Gastrocnemius medialis (tissue), 4 donors: ENCODE measurements at regions of chr2 and their contacts with region 1.

Region 1: GRCh38 chr2:117814417-117815264 is at the start of gene DDX18:
- DNase-seq: peak; percentile 94 to 95
- ATAC-seq: peak; percentile 98
- H3K4me3 ChIP-seq: peak within 1 kb of the TSS; percentile 80 to 87 (median 81)
- H3K27ac ChIP-seq: peak within 1 kb of the TSS; percentile 89 to 92 (median 92)
- H3K4me1 ChIP-seq: peaks cover 18 to 27% of the 10 kb centered on the region in 2 donors
- H3K27me3 ChIP-seq: no peaks in the 10 kb centered on the region
- CTCF ChIP-seq: peak; percentile 90 to 99 (median 99)
- POLR2A ChIP-seq: peak; percentile 63 to 68
- total RNA-seq, gene DDX18: 21.8 to 37.1 (median 24.7) TPM

Region 2: GRCh38 chr2:118003396-118003824 is 188.8 kb after region 1 on chr2:
- in situ Hi-C with region 1: no loop called
- intact Hi-C with region 1: loop called (anchors 1 kb)
- DNase-seq: peak; percentile 10 to 16
- ATAC-seq: peak; percentile 90 to 97
- H3K4me3 ChIP-seq: no peak overlapping the region
- H3K27ac ChIP-seq: no peak overlapping the region
- H3K4me1 ChIP-seq: peaks cover 0 to 5% of the 10 kb centered on the region in 2 donors
- H3K27me3 ChIP-seq: no peaks in the 10 kb centered on the region
- CTCF ChIP-seq: peak; percentile 62 to 83 (median 71)
- POLR2A ChIP-seq: no peak

Region 3: DNA sequence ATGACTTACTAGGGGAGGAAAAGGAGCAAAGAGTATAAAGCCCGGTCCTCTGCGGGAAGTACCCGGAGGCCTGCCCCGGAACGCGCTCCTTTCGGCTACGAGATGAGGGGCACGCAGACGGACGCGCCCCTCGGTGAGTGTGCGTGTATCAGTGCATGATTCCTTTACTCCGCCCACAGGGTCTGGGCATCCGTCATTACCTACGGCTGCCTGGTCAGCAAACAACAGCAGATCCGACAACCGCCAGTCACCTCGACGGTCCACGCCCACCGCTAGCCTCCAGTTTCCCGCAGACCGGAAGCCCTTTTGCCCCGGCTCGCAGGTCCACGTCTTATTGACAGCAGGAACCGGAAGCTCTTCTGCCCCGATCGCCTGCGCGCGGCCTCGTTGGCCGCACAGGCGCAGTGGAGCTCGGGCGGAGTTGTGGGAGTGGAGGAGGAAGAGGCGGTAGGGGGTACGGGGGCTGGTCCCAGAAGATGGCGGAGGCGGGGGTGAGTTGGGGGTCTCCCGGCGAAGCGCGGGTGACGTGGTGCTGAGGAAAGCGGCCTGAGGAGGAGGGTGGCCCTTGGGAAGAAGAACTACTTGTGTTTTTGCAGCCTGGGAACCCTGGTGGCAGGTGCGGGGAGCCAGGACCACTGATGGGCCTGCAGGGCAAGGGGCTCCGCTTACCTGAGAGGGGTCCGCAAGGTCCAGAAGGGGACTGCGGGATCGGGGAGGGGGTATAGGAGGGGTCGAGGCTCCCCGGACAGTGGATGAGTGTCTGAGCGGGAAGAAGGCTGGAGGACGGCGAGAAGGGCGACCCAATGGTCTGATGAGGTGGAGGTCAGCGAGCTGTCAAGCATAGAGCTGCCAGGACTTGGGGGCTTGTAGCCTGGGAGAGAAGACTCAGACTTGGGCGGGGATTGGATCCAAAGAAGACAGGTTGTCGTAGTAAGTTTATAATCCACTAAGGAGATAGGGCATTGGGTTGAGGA is 273.7 kb after region 1 on chr2 and contains the start of gene INSIG2:
- in situ Hi-C with region 1: no loop called
- intact Hi-C with region 1: loop called (anchors 2 kb)
- DNase-seq: peak; percentile 90 to 91
- ATAC-seq: peak; percentile 98 to 99
- H3K4me3 ChIP-seq: peak within 1 kb of the TSS; percentile 63 to 97 (median 91)
- H3K27ac ChIP-seq: peak within 1 kb of the TSS; percentile 65 to 82 (median 66)
- H3K4me1 ChIP-seq: peaks cover 12 to 24% of the 10 kb centered on the region in 2 donors
- H3K27me3 ChIP-seq: no peaks in the 10 kb centered on the region
- CTCF ChIP-seq: no peak
- POLR2A ChIP-seq: peak; percentile 39 to 40
- total RNA-seq, gene INSIG2: 4.4 to 5.6 (median 5.4) TPM

Region 4: GRCh38 chr2:118774458-118775133 is 960.0 kb after region 1 on chr2:
- in situ Hi-C with region 1: no loop called
- intact Hi-C with region 1: loop called (anchors 10 kb)
- DNase-seq: peak; percentile 27 to 65
- ATAC-seq: peak; percentile 85 to 93
- H3K4me3 ChIP-seq: peak overlapping the region; percentile 53 to 66 (median 60)
- H3K27ac ChIP-seq: peak overlapping the region; percentile 78 to 85 (median 79)
- H3K4me1 ChIP-seq: peaks cover 0 to 12% of the 10 kb centered on the region in 2 donors
- H3K27me3 ChIP-seq: no peaks in the 10 kb centered on the region
- CTCF ChIP-seq: no peak
- POLR2A ChIP-seq: peak; percentile 47 to 49

Region 5: GRCh38 chr2:118855451-118856279 is 1041.0 kb after region 1 on chr2:
- in situ Hi-C with region 1: no loop called
- intact Hi-C with region 1: loop called (anchors 10 kb)
- DNase-seq: peak; percentile 65 to 79
- ATAC-seq: peak; percentile 63 to 65
- H3K4me3 ChIP-seq: peak overlapping the region; percentile 64 to 87 (median 73)
- H3K27ac ChIP-seq: peak overlapping the region; percentile 92 to 97 (median 96)
- H3K4me1 ChIP-seq: peaks cover 0 to 10% of the 10 kb centered on the region in 2 donors
- H3K27me3 ChIP-seq: peaks cover 0 to 14% (median 7%) of the 10 kb centered on the region in 3 donors
- CTCF ChIP-seq: peak; percentile 90 to 99 (median 98)
- POLR2A ChIP-seq: no peak

Region 6: GRCh38 chr2:119366649-119367471 is 1552.2 kb after region 1 on chr2 and contains the starts of genes C2orf76 and DBI:
- in situ Hi-C with region 1: no loop called
- intact Hi-C with region 1: loop called (anchors 10 kb)
- DNase-seq: peak; percentile 94 to 96
- ATAC-seq: peak; percentile 84 to 86
- H3K4me3 ChIP-seq: peak within 1 kb of the TSS; percentile 67 to 81 (median 78)
- H3K27ac ChIP-seq: peak within 1 kb of the TSS; percentile 87 to 95 (median 95)
- H3K4me1 ChIP-seq: peaks cover 44 to 47% of the 10 kb centered on the region in 2 donors
- H3K27me3 ChIP-seq: no peaks in the 10 kb centered on the region
- CTCF ChIP-seq: peak in 1 of 5 experiments; percentile 9
- POLR2A ChIP-seq: peak; percentile 90 to 91
- total RNA-seq, gene C2orf76: 0.61 to 5.9 (median 2.6) TPM in 3 of 4 donors, not detected in the other
- total RNA-seq, gene DBI: 17.3 to 102 (median 55.2) TPM